Panc1 (cell line): ENCODE measurements at regions of chr15 and their contacts with region 1.

Region 1: GRCh38 chr15:27706300-27706699 is 392.8 kb downstream of the OCA2 start:
- DNase-seq: no peak
- ATAC-seq: no peak
- H3K4me3 ChIP-seq: no peak overlapping the region
- H3K27ac ChIP-seq: no peak overlapping the region
- H3K4me1 ChIP-seq: no peaks in the 10 kb centered on the region
- H3K27me3 ChIP-seq: no peaks in the 10 kb centered on the region
- CTCF ChIP-seq: no peak

Region 2: GRCh38 chr15:27648359-27648758 is 57.9 kb before region 1 on chr15:
- CTCF ChIA-PET with region 1: no interaction called
- POLR2A ChIA-PET with region 1: no interaction called
- in situ Hi-C with region 1: no loop called
- intact Hi-C with region 1: no loop called
- DNase-seq: no peak
- ATAC-seq: no peak
- H3K4me3 ChIP-seq: no peak overlapping the region
- H3K27ac ChIP-seq: no peak overlapping the region
- H3K4me1 ChIP-seq: no peaks in the 10 kb centered on the region
- H3K27me3 ChIP-seq: no peaks in the 10 kb centered on the region
- CTCF ChIP-seq: no peak

Region 3: GRCh38 chr15:27662892-27663291 is 43.4 kb before region 1 on chr15:
- CTCF ChIA-PET with region 1: interaction called, 10 read pairs
- POLR2A ChIA-PET with region 1: no interaction called
- in situ Hi-C with region 1: no loop called
- intact Hi-C with region 1: no loop called
- DNase-seq: no peak
- ATAC-seq: no peak
- H3K4me3 ChIP-seq: no peak overlapping the region
- H3K27ac ChIP-seq: no peak overlapping the region
- H3K4me1 ChIP-seq: no peaks in the 10 kb centered on the region
- H3K27me3 ChIP-seq: no peaks in the 10 kb centered on the region
- CTCF ChIP-seq: no peak

Region 4: DNA sequence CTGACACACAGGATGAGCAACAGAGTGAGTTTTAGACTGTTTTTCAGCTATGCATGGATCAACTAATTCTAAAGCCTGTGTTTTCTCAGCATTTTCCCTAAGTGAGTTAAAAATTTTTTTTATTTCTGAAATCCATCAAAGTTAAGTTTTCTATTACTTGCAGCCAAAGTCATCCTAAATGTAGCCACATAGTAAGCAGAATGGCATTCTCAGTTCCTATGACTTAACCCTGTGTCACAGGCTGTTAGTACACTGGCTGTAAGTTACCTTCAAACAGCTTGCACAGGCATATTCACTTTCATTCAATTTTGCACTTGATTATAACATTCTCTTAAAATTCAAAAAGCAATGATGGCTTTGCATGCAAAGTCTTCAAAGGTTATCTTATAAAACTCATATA is 24.6 kb after region 1 on chr15:
- CTCF ChIA-PET with region 1: no interaction called
- POLR2A ChIA-PET with region 1: no interaction called
- in situ Hi-C with region 1: no loop called
- intact Hi-C with region 1: no loop called
- DNase-seq: no peak
- ATAC-seq: no peak
- H3K4me3 ChIP-seq: no peak overlapping the region
- H3K27ac ChIP-seq: no peak overlapping the region
- H3K4me1 ChIP-seq: no peaks in the 10 kb centered on the region
- H3K27me3 ChIP-seq: no peaks in the 10 kb centered on the region
- CTCF ChIP-seq: no peak

Region 5: GRCh38 chr15:29003191-29003839 is 1297.0 kb after region 1 on chr15:
- CTCF ChIA-PET with region 1: no interaction called
- POLR2A ChIA-PET with region 1: no interaction called
- in situ Hi-C with region 1: no loop called
- intact Hi-C with region 1: no loop called
- DNase-seq: no peak
- ATAC-seq: no peak
- H3K4me3 ChIP-seq: no peak overlapping the region
- H3K27ac ChIP-seq: no peak overlapping the region
- H3K4me1 ChIP-seq: no peaks in the 10 kb centered on the region
- H3K27me3 ChIP-seq: no peaks in the 10 kb centered on the region
- CTCF ChIP-seq: no peak